ENCODE measurements at regions of chr11 and their contacts with region 1.

Region 1: DNA sequence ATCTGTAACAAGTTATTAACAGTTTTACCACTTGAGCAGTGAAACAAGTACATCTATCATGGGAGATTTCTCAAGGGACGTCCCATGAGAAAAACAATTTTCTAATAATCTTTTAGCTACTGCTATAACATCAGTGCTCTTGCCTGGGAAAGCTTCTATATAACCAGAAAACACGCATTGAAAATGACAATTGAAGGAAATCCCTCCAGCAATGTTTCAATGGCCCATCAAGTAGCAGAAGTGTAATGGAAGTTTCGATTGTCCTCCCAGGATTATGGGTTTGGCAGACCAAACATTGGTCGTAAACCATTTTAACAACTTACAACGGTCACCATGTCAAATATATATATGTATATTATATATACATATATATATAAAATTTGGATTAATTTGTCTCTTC is 8.0 kb upstream of the PRR33 start:
- DNase-seq: no peak
- H3K4me3 ChIP-seq: no peak overlapping the region
- H3K4me1 ChIP-seq: no peaks in the 10 kb centered on the region
- H3K27me3 ChIP-seq: peaks cover 7% of the 10 kb centered on the region

Region 2: GRCh38 chr11:1515082-1516060 is 384.3 kb before region 1 on chr11:
- in situ Hi-C with region 1: no loop called
- DNase-seq: peak; percentile 27 to 89
- H3K4me3 ChIP-seq: no peak overlapping the region
- H3K4me1 ChIP-seq: peaks cover 4% of the 10 kb centered on the region
- H3K27me3 ChIP-seq: no peaks in the 10 kb centered on the region

Region 3: DNA sequence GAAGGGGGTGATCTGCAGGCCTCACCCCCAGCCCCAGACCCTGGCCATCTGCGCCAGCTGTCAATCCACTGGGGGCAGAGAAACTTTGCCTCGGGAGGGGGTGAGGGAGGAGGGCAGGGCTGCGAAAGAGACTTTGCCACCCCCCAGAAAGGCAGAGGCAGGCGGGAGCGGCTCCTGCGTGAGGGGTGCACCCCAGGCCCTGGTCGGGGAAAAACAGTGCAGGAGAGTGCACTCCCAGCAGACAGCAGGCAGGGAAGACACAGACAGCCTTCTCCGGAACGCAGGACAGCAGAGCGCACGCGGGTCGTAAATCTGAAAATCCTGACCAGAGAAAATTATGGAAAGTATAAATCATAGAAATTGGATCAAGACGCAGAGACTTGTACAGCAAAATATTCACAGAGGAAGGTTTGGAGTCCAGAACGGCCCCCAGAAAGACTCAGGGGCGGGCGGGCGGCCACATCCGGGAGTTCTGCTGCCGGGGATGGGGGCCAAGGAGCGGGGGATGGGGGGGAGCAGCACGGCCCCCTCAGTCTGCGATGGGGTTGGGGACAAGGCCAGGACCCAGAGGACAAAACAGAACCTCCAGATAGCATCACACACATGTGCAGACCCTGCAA is 39.4 kb after region 1 on chr11:
- in situ Hi-C with region 1: loop called (anchors 5 kb)
- DNase-seq: no peak
- H3K4me3 ChIP-seq: no peak overlapping the region
- H3K4me1 ChIP-seq: peaks cover 3% of the 10 kb centered on the region; the same call in 1 of the 2 replicates
- H3K27me3 ChIP-seq: no peaks in the 10 kb centered on the region

Region 4: DNA sequence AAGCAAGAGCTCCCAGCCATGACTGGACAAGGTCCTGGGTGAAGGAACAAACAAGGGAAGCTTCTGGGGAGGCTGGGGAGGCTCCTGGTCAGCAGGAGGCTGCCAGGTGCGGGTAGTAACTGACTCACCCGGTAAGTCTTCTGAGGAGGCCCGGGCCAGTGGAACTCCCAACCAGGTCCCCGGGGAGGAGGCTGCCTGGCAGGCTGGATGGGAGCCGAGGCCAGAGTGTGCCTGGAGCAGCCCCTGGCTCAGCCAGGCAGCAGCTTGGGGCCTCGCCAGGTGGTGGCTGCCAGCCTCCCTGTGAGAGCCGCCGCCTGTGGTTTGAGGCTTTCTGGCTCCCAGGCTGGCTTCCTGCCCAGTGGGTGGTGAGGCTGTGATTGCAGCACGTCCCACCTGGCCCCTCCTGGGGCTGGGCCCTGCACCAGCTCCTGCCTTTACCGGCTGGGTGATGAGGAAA is 193.3 kb after region 1 on chr11:
- in situ Hi-C with region 1: no loop called
- DNase-seq: no peak
- H3K4me3 ChIP-seq: no peak overlapping the region
- H3K4me1 ChIP-seq: no peaks in the 10 kb centered on the region
- H3K27me3 ChIP-seq: no peaks in the 10 kb centered on the region

Measured in HAP-1 (cell line).